ENCODE measurements at regions of chr15 and their contacts with region 1.

Region 1: DNA sequence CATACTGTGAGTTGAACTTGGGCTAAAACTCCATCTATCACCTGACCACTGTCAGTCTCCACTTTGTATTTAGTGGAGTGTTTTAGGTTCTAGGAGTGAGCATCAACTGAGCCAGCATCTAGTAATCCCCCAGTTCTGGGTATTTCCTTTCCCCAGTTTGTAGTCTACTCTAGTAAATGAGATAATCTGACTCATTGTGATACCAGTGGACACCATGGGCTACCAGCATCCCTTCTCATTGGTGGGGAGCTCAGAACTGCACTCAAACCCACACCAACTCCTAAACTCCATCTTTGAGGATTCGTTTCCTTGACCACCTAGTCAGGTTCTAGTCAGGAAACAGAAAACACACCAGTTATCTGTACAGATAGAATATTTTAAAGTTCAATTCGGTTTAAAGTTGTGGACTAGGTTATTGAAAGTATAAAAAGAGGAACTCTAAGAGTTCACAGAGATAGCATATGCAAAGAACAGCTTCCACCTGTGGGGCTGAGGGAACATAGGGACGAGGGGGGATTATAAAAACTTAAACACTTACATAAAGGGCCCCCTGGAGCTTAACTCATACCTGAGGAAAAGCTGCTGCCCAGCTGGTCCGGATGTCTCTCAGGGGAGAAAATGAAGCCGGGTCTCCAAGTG is 36.0 kb downstream of the LEO1 start:
- DNase-seq: no peak
- ATAC-seq: peak; percentile 89
- H3K4me3 Mint-ChIP-seq: peak overlapping the region; percentile 33
- H3K27ac Mint-ChIP-seq: peak overlapping the region; percentile 87
- H3K4me1 Mint-ChIP-seq: peaks cover 31% of the 10 kb centered on the region
- H3K27me3 Mint-ChIP-seq: no peaks in the 10 kb centered on the region
- CTCF ChIP-seq: no peak

Region 2: GRCh38 chr15:51425517-51426367 is 509.8 kb before region 1 on chr15:
- CTCF ChIA-PET with region 1: no interaction called
- POLR2A ChIA-PET with region 1: no interaction called
- intact Hi-C with region 1: no loop called
- DNase-seq: no peak
- ATAC-seq: no peak
- H3K4me3 Mint-ChIP-seq: no peak overlapping the region
- H3K27ac Mint-ChIP-seq: no peak overlapping the region
- H3K4me1 Mint-ChIP-seq: no peaks in the 10 kb centered on the region
- H3K27me3 Mint-ChIP-seq: peaks cover 2% of the 10 kb centered on the region
- CTCF ChIP-seq: no peak

Region 3: GRCh38 chr15:51708013-51708412 is 227.6 kb before region 1 on chr15:
- CTCF ChIA-PET with region 1: no interaction called
- POLR2A ChIA-PET with region 1: no interaction called
- intact Hi-C with region 1: no loop called
- DNase-seq: no peak
- ATAC-seq: no peak
- H3K4me3 Mint-ChIP-seq: no peak overlapping the region
- H3K27ac Mint-ChIP-seq: no peak overlapping the region
- H3K4me1 Mint-ChIP-seq: no peaks in the 10 kb centered on the region
- H3K27me3 Mint-ChIP-seq: no peaks in the 10 kb centered on the region
- CTCF ChIP-seq: no peak

Region 4: GRCh38 chr15:51737280-51738017 is 198.1 kb before region 1 on chr15 and contains the start of gene LYSMD2:
- CTCF ChIA-PET with region 1: no interaction called
- POLR2A ChIA-PET with region 1: no interaction called
- intact Hi-C with region 1: no loop called
- DNase-seq: peak; percentile 75
- ATAC-seq: peak; percentile 49
- H3K4me3 Mint-ChIP-seq: peak within 1 kb of the TSS; percentile 90
- H3K27ac Mint-ChIP-seq: peak within 1 kb of the TSS; percentile 93
- H3K4me1 Mint-ChIP-seq: peaks cover 52% of the 10 kb centered on the region
- H3K27me3 Mint-ChIP-seq: no peaks in the 10 kb centered on the region
- CTCF ChIP-seq: no peak
- total RNA-seq, gene LYSMD2: 41.8 and 48.6 TPM in 2 replicates

Region 5: DNA sequence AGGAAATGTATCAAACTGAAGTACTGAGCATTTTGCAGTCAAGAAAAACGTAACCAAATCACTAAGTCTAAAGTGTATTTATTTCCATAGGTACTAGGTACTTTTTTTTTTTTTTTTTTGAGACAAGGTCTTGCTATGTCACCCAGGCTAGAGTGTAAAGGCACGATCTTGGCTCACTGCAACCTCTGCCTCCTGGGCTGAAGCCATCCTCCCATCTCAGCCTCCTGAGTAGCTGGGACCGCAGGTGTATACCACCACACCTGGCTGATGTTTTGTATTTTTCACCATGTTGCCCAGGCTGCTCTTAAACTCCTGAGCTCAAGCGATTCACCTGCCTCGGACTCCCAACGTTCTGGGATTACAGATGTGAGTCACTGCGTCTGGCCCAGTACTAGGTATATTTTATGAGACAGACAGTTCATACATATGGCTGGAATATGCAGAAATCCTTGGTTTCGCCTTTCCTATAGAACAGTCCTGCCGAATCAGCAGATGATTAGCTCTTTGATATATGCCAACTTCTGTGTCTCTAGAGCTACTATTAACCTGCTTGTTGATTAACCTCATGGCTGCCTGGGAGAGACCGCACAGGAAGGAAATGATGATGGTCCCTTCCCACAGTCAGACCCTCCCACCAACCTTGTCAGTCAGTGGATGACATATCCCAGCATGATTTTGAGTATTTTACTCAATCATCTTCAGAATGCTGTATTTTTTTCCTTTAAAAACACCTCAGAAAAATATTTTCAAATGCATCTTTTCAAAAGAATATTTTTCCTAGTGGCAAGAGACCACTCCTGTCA is 73.8 kb before region 1 on chr15:
- CTCF ChIA-PET with region 1: no interaction called
- POLR2A ChIA-PET with region 1: interaction called, 10 read pairs
- intact Hi-C with region 1: no loop called
- DNase-seq: no peak
- ATAC-seq: peak; percentile 45
- H3K4me3 Mint-ChIP-seq: no peak overlapping the region
- H3K27ac Mint-ChIP-seq: no peak overlapping the region
- H3K4me1 Mint-ChIP-seq: peaks cover 29% of the 10 kb centered on the region
- H3K27me3 Mint-ChIP-seq: no peaks in the 10 kb centered on the region
- CTCF ChIP-seq: no peak

Region 6: DNA sequence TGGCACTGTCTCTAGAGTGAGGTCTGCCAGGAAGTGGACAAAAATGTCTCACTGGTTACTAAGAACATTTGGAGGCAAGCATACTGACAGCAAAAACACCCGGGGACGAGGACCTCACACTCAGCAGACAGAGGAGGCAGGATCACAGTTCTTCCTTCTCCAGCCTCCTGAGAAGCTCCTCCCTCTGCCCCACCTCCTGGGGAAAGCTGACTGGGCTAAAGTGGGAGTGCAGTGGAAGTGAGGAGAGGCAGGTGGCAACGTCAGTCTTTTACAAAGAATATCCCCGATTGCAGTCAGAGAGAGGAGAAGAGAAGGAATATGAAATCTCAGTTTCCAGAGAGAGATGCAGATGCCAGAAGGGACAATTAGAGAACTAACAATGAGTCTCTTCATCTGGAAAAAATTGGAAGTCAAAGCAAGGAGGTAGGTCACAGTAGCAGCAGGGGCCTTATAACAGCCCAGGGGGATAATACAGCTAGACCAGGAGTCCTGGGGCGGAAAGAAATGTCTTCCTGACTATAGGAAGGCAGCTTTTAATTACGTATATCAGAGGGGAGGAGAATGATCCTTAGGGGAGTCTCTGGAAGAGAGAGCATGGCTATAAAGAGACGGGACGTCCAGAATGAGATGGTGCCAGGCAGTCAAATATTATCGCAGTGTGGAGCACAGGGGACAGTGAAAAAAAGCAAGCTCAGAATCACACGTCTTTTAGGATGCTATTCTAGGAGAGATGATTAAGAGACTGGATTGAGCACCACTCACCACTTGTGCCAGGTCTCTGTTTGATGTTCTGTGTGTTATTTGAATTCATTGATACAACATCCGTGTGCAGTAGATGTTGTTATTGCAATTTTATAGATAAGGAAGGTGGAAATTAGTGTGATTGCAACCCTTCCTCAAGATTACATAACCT is 11.2 kb before region 1 on chr15:
- CTCF ChIA-PET with region 1: no interaction called
- POLR2A ChIA-PET with region 1: no interaction called
- intact Hi-C with region 1: no loop called
- DNase-seq: no peak
- ATAC-seq: no peak
- H3K4me3 Mint-ChIP-seq: no peak overlapping the region
- H3K27ac Mint-ChIP-seq: no peak overlapping the region
- H3K4me1 Mint-ChIP-seq: no peaks in the 10 kb centered on the region
- H3K27me3 Mint-ChIP-seq: no peaks in the 10 kb centered on the region
- CTCF ChIP-seq: no peak

Region 7: GRCh38 chr15:51971375-51972133 is 36.0 kb after region 1 on chr15 and contains the start of gene LEO1:
- CTCF ChIA-PET with region 1: no interaction called
- POLR2A ChIA-PET with region 1: interaction called, 7 read pairs
- intact Hi-C with region 1: loop called (anchors 1 kb)
- DNase-seq: peak; percentile 69
- ATAC-seq: peak; percentile 96
- H3K4me3 Mint-ChIP-seq: peak within 1 kb of the TSS; percentile 100
- H3K27ac Mint-ChIP-seq: peak within 1 kb of the TSS; percentile 99
- H3K4me1 Mint-ChIP-seq: peaks cover 21% of the 10 kb centered on the region
- H3K27me3 Mint-ChIP-seq: no peaks in the 10 kb centered on the region
- CTCF ChIP-seq: no peak
- total RNA-seq, gene LEO1: 18.3 and 19.1 TPM in 2 replicates

Measured in activated B cell treated with CpG ODN at 0.5 μM for 24 hours (primary cell).